ENCODE measurements at regions of chr5 and their contacts with region 1.

Region 1: DNA sequence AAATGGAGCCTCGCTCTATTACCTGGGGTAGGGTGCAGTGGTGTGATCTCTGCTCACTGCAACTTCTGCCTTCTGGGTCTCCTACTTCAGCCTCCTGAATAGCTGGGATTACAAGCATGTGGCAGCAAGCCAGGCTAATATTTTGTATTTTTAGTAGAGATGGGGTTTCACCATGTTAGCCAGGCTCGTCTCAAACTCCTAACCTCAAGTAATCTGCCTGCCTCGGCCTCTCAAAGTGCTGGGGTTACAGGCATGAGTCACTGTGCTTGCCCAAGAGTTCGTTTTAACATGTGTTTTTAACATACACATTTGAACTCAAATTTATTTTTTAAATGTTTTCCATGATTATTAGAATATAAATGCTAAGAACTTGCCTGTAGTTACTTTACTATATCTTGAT is 34.2 kb downstream of the MARCHF6 start:
- DNase-seq: no peak
- ATAC-seq: no peak
- H3K4me3 ChIP-seq: no peak overlapping the region
- H3K27ac ChIP-seq: no peak overlapping the region
- H3K4me1 ChIP-seq: no peaks in the 10 kb centered on the region
- H3K27me3 ChIP-seq: no peaks in the 10 kb centered on the region
- CTCF ChIP-seq: no peak

Region 2: DNA sequence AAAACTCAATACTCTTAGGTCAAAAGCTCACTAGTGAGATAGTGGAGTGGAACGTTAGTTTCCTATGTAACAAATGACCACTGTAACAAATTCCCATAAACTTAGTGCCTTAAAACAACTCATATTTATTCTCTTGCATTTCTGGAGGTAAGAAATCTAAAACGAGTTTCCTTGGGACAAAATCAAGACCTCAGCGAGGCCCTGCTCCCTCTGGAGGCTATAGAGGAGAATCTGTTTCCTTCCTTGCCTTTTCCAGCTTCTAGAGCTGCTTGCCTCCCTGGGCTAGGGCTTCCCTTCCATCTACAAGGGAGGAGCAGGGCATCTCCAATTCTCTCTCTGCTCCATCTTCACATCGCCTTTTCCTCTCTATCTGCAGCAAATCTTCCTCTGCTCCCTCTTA is 873.9 kb before region 1 on chr5:
- intact Hi-C with region 1: no loop called
- DNase-seq: no peak
- ATAC-seq: peak in 2 of 4 donors; percentile 44 to 56
- H3K4me3 ChIP-seq: no peak overlapping the region
- H3K27ac ChIP-seq: no peak overlapping the region
- H3K4me1 ChIP-seq: no peaks in the 10 kb centered on the region
- H3K27me3 ChIP-seq: no peaks in the 10 kb centered on the region
- CTCF ChIP-seq: no peak

Region 3: DNA sequence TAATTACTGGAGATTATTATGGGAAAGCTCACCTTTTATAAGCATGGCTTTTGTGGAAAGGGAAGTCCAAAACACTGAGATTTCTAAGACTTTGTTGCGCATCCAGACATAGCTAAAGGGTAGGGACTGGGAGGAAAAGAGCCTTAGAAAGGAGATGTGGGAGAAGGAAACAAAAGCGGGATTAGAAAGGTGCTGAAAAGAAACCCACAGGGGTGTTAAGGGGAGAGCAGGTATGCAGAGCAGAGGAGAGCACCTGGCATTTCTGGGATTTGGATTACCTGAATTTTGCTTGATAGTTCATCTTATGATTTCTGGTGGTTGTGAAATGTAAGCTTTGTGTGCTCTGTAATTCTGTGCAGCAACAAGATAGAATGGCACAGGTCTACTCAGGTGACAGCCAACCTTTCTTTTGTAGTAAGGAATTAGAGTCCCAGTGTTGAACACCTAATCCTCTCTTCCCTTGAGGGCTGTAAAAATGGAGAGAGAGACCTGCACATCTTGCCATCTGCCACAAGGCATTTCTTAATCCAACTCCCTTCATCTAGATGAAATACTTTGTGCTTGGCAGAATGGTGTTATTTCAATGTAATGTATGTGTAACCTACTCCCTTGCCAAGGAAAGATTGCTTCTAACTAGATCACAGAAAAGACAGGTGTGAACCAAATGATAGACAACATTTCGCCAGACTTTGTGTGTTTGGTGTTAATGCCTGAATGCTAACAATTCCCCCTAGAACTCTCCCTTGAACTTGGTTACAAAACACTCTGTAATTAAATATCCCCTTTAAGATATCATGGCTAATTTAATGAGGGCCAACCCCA is 185.4 kb before region 1 on chr5:
- intact Hi-C with region 1: no loop called
- DNase-seq: no peak
- ATAC-seq: no peak
- H3K4me3 ChIP-seq: no peak overlapping the region
- H3K27ac ChIP-seq: no peak overlapping the region
- H3K4me1 ChIP-seq: no peaks in the 10 kb centered on the region
- H3K27me3 ChIP-seq: no peaks in the 10 kb centered on the region
- CTCF ChIP-seq: no peak

Region 4: GRCh38 chr5:10249948-10250803 is 137.5 kb before region 1 on chr5 and contains the start of gene CCT5:
- intact Hi-C with region 1: loop called in 1 of 3 experiments (anchors 10 kb)
- DNase-seq: peak; percentile 89 to 98 (median 92)
- ATAC-seq: peak; percentile 88 to 94 (median 92)
- H3K4me3 ChIP-seq: peak within 1 kb of the TSS; percentile 82 to 98 (median 95)
- H3K27ac ChIP-seq: peak within 1 kb of the TSS; percentile 85 to 98 (median 94)
- H3K4me1 ChIP-seq: peaks cover 11 to 19% (median 15%) of the 10 kb centered on the region in 3 donors
- H3K27me3 ChIP-seq: no peaks in the 10 kb centered on the region
- CTCF ChIP-seq: no peak
- total RNA-seq, gene CCT5: 33.7 to 75.6 (median 61.7) TPM